ENCODE measurements at regions of chr16 and their contacts with region 1.

Region 1: GRCh38 chr16:79269211-79269863 is 331.2 kb downstream of the MAF start:
- DNase-seq: peak; percentile 58
- H3K4me3 Mint-ChIP-seq: peak overlapping the region; percentile 60
- H3K27ac Mint-ChIP-seq: peak overlapping the region; percentile 89
- H3K4me1 Mint-ChIP-seq: peaks cover 88% of the 10 kb centered on the region
- H3K27me3 Mint-ChIP-seq: peaks cover 12% of the 10 kb centered on the region

Region 2: DNA sequence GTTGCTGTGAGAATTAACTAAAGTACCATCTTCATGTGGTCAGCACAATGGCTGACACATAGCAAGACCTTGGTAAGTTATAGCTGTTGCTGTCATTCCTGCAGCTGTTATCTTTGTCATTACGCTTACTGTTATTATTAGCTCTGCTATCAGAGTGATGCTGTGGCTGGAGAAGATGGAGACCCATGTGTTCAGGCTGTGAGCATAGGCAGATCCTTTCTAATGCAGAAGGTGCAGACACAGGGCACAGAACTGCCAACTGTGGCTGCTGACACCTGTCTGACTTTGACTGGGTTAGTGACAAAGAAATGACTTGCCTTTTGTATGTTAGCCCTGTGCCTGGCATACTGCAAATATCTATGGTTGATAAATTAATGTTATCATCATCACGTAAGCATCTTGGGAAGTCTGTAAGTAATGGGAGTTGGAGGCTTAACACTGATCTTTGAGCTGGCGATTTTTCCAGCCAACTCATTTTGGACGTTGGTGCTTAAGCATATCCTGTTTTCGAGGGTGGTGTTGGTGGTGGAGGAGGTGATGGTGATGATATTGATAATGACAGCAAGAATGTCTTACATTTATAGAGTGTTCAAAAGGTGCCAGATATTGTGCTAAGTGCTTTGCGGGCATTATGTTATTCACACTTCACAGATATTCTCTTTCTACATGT is 474.6 kb before region 1 on chr16:
- intact Hi-C with region 1: loop called (anchors 5 kb)
- DNase-seq: no peak
- H3K4me3 Mint-ChIP-seq: no peak overlapping the region
- H3K27ac Mint-ChIP-seq: peak overlapping the region; percentile 77
- H3K4me1 Mint-ChIP-seq: peaks cover 35% of the 10 kb centered on the region
- H3K27me3 Mint-ChIP-seq: no peaks in the 10 kb centered on the region

Region 3: DNA sequence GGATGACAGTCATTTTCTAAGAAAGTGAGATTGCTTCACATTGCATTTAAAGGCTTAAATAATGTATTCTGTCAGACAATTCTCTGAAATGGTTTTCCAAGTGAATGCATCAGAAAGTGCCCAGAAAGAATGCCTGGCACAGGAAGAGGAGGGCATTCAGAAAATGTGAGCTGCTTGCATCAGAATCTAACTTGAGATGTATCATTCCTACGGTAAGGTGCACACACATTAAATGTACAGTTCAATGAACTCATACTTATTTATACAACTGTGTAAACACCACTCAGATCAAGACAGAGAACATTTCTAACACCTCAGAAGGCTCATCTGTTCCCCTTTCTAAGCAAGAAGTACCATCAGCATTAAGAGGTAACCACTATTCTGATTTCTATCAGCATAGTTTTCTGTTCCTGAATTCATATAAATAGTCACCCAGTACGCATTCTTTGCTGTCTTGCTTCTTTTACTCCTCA is 306.8 kb before region 1 on chr16:
- intact Hi-C with region 1: loop called (anchors 1 kb)
- DNase-seq: no peak
- H3K4me3 Mint-ChIP-seq: no peak overlapping the region
- H3K27ac Mint-ChIP-seq: peak overlapping the region; percentile 53
- H3K4me1 Mint-ChIP-seq: peaks cover 9% of the 10 kb centered on the region
- H3K27me3 Mint-ChIP-seq: peaks cover 2% of the 10 kb centered on the region

Region 4: GRCh38 chr16:79037521-79038373 is 231.6 kb before region 1 on chr16:
- intact Hi-C with region 1: no loop called
- DNase-seq: no peak
- H3K4me3 Mint-ChIP-seq: no peak overlapping the region
- H3K27ac Mint-ChIP-seq: no peak overlapping the region
- H3K4me1 Mint-ChIP-seq: peaks cover 19% of the 10 kb centered on the region
- H3K27me3 Mint-ChIP-seq: no peaks in the 10 kb centered on the region

Region 5: GRCh38 chr16:79069121-79069520 is 200.2 kb before region 1 on chr16:
- intact Hi-C with region 1: no loop called
- DNase-seq: no peak
- H3K4me3 Mint-ChIP-seq: no peak overlapping the region
- H3K27ac Mint-ChIP-seq: peak overlapping the region; percentile 85
- H3K4me1 Mint-ChIP-seq: peaks cover 60% of the 10 kb centered on the region
- H3K27me3 Mint-ChIP-seq: peaks cover 3% of the 10 kb centered on the region

Region 6: GRCh38 chr16:79163691-79164387 is 105.5 kb before region 1 on chr16:
- intact Hi-C with region 1: loop called (anchors 5 kb)
- DNase-seq: no peak
- H3K4me3 Mint-ChIP-seq: peak overlapping the region; percentile 28
- H3K27ac Mint-ChIP-seq: peak overlapping the region; percentile 24
- H3K4me1 Mint-ChIP-seq: peaks cover 22% of the 10 kb centered on the region
- H3K27me3 Mint-ChIP-seq: no peaks in the 10 kb centered on the region

Region 7: DNA sequence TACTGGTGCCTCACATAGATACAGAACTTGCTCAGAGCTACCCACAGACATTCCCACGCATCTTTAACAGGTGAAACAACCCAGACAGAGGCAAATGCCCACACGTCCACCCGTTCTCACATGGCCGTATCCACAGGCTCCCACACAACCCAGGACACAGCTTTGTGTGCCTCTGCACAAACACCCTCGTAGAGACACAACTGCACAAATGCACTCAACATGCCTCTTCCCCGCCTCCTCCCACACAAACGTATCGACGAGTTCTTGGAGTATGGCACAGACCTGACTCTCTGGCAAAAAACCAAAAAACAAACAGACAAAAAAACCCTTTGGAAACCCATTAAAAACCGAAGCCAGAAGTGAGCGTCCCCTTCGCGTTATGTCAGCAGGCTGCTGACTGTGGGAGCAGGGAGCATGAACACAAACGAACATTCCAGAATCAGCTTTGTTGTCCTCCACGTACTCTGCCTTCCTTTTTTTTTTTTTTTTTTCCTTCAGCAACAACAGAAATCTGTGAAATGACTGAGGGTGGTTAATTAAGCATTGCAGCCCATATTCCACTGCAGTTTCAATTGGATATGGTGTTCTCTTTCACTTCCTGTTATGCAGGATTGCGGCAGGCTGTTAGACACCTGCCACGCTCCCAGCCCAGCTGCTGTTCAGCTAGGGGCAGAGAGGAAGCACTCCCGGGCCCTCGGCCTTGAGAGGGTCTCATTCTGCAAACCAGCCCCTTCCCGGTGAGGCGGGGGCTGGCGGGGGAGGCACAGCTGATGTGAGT is 17.5 kb after region 1 on chr16:
- intact Hi-C with region 1: loop called (anchors 1 kb)
- DNase-seq: no peak
- H3K4me3 Mint-ChIP-seq: peak overlapping the region; percentile 51
- H3K27ac Mint-ChIP-seq: peak overlapping the region; percentile 77
- H3K4me1 Mint-ChIP-seq: peaks cover 56% of the 10 kb centered on the region
- H3K27me3 Mint-ChIP-seq: peaks cover 8% of the 10 kb centered on the region

Region 8: GRCh38 chr16:79451196-79451816 is 182.0 kb after region 1 on chr16:
- intact Hi-C with region 1: loop called (anchors 2 kb)
- DNase-seq: no peak
- H3K4me3 Mint-ChIP-seq: no peak overlapping the region
- H3K27ac Mint-ChIP-seq: no peak overlapping the region
- H3K4me1 Mint-ChIP-seq: peaks cover 6% of the 10 kb centered on the region
- H3K27me3 Mint-ChIP-seq: peaks cover 8% of the 10 kb centered on the region

Region 9: GRCh38 chr16:79843631-79844043 is 574.3 kb after region 1 on chr16:
- intact Hi-C with region 1: loop called (anchors 1 kb)
- DNase-seq: no peak
- H3K4me3 Mint-ChIP-seq: peak overlapping the region; percentile 45
- H3K27ac Mint-ChIP-seq: peak overlapping the region; percentile 70
- H3K4me1 Mint-ChIP-seq: peaks cover 42% of the 10 kb centered on the region
- H3K27me3 Mint-ChIP-seq: no peaks in the 10 kb centered on the region

Measured in activated T-helper 1 cell treated with anti-CD3 and anti-CD28 coated beads, Interleukin-12 subunit alpha, Interleukin-12 subunit beta, Interleukin-2, Interleukin-4 antibody, amounts not matched to agents 30 ng/mL and 10 ng/mL and 1 ng/mL, durations not matched to agents 14 hours and 24 hours and 36 hours (primary cell).